Naive thymus-derived CD4-positive, alpha-beta T cell (primary cell): ENCODE measurements at regions of chr9 and their contacts with region 1.

Region 1: GRCh38 chr9:35603987-35604577 is 980 bp upstream of the TESK1 start:
- DNase-seq: peak; percentile 94 to 99 (median 99)
- ATAC-seq: peak; percentile 95
- H3K4me3 ChIP-seq: peak overlapping the region; percentile 65
- H3K4me3 Mint-ChIP-seq: peak overlapping the region; percentile 92 to 100 (median 98)
- H3K27ac ChIP-seq: peak overlapping the region; percentile 84
- H3K27ac Mint-ChIP-seq: peak overlapping the region; percentile 94 to 99 (median 98)
- H3K4me1 ChIP-seq: peaks cover 22 to 24% of the 10 kb centered on the region in 2 donors
- H3K4me1 Mint-ChIP-seq: peaks cover 21 to 42% (median 35%) of the 10 kb centered on the region in 7 donors
- H3K27me3 ChIP-seq: no peaks in the 10 kb centered on the region
- H3K27me3 Mint-ChIP-seq: no peaks in the 10 kb centered on the region

Region 2: GRCh38 chr9:34665381-34666250 is 938.5 kb before region 1 on chr9:
- CTCF ChIA-PET with region 1: no interaction called
- POLR2A ChIA-PET with region 1: no interaction called
- intact Hi-C with region 1: loop called (anchors 1 to 5 kb)
- DNase-seq: peak; percentile 74 to 90 (median 84)
- ATAC-seq: peak; percentile 90
- H3K4me3 ChIP-seq: peak overlapping the region; percentile 99
- H3K4me3 Mint-ChIP-seq: peak overlapping the region; percentile 89 to 97 (median 94)
- H3K27ac ChIP-seq: peak overlapping the region; percentile 98
- H3K27ac Mint-ChIP-seq: peak overlapping the region; percentile 86 to 98 (median 97)
- H3K4me1 ChIP-seq: peaks cover 33 to 40% of the 10 kb centered on the region in 2 donors
- H3K4me1 Mint-ChIP-seq: peaks cover 37 to 58% (median 50%) of the 10 kb centered on the region in 7 donors
- H3K27me3 ChIP-seq: no peaks in the 10 kb centered on the region
- H3K27me3 Mint-ChIP-seq: no peaks in the 10 kb centered on the region

Region 3: DNA sequence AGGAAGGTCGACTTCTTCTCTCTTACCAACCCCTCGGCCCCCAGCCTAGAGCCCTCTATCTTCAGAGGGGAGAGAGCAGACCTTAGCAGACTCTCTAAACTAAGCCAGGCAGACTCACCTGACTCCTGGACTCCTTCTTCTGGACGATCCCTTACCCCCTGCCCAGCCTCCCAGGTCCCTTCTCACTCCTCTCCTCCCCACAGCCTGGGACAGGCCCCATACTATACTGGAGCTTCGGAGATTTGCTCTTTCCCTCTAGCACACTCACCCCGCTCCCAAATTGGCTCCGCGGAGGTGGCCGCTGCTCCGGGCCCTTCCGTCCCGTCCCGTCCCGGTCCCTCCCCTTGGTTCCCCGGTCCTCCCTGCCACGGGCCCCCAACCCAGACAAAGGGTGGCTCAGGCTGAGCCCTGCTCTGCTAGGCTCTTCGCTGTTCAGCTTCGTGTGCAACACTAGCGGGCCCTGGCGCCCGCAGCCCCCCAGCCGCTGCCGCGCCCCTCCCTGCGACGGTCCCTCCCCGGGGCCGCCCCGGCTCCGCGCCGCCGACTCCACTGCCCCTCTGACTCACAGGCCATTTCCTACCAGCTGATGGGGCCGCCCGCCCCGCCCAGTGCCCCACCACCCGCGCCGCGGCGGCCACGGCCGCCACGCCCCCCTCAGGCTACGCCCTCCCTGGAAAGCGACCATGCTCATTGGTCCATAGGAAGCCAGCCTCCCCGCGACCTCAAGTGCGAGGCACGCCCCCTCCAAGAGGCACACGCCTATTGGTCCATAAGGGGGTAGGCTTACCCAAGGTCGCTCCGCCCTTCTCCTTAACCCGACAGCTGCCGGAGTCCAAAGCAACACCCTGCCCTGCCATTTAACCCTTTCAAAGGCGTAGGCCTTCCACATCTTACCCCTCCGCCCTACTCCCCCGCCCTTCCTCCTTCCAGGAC is 492.8 kb before region 1 on chr9:
- CTCF ChIA-PET with region 1: no interaction called
- POLR2A ChIA-PET with region 1: no interaction called
- intact Hi-C with region 1: loop called (anchors 1 kb)
- DNase-seq: peak; percentile 77 to 96 (median 91)
- ATAC-seq: peak; percentile 86
- H3K4me3 ChIP-seq: peak overlapping the region; percentile 69
- H3K4me3 Mint-ChIP-seq: peak overlapping the region; percentile 55 to 87 (median 80)
- H3K27ac ChIP-seq: peak overlapping the region; percentile 71
- H3K27ac Mint-ChIP-seq: peak overlapping the region; percentile 62 to 94 (median 85)
- H3K4me1 ChIP-seq: peaks cover 36 to 37% of the 10 kb centered on the region in 2 donors
- H3K4me1 Mint-ChIP-seq: peaks cover 29 to 63% (median 58%) of the 10 kb centered on the region in 7 donors
- H3K27me3 ChIP-seq: no peaks in the 10 kb centered on the region
- H3K27me3 Mint-ChIP-seq: no peaks in the 10 kb centered on the region

Region 4: GRCh38 chr9:35696525-35697215 is 92.6 kb after region 1 on chr9:
- CTCF ChIA-PET with region 1: interaction called, 8 read pairs
- POLR2A ChIA-PET with region 1: interaction called, 5 read pairs
- intact Hi-C with region 1: loop called (anchors 1 kb)
- DNase-seq: peak in 8 of 9 donors; percentile 15 to 56 (median 41)
- ATAC-seq: peak; percentile 91
- H3K4me3 ChIP-seq: no peak overlapping the region
- H3K4me3 Mint-ChIP-seq: no peak overlapping the region
- H3K27ac ChIP-seq: no peak overlapping the region
- H3K27ac Mint-ChIP-seq: peak overlapping the region in 8 of 9 donors; percentile 33 to 85 (median 66)
- H3K4me1 ChIP-seq: peaks cover 0 to 10% of the 10 kb centered on the region in 2 donors
- H3K4me1 Mint-ChIP-seq: peaks cover 6 to 15% (median 12%) of the 10 kb centered on the region in 7 donors
- H3K27me3 ChIP-seq: no peaks in the 10 kb centered on the region
- H3K27me3 Mint-ChIP-seq: no peaks in the 10 kb centered on the region

Region 5: GRCh38 chr9:35814841-35815543 is 210.9 kb after region 1 on chr9 and contains the start of gene HINT2:
- CTCF ChIA-PET with region 1: no interaction called
- POLR2A ChIA-PET with region 1: interaction called, 7 read pairs
- intact Hi-C with region 1: loop called in 1 of 2 experiments (anchors 1 kb)
- DNase-seq: peak; percentile 84 to 98 (median 96)
- ATAC-seq: peak; percentile 86
- H3K4me3 ChIP-seq: peak within 1 kb of the TSS; percentile 100
- H3K4me3 Mint-ChIP-seq: peak within 1 kb of the TSS; percentile 91 to 100 (median 96)
- H3K27ac ChIP-seq: peak within 1 kb of the TSS; percentile 77
- H3K27ac Mint-ChIP-seq: peak within 1 kb of the TSS; percentile 87 to 99 (median 95)
- H3K4me1 ChIP-seq: peaks cover 19 to 27% of the 10 kb centered on the region in 2 donors
- H3K4me1 Mint-ChIP-seq: peaks cover 23 to 43% (median 38%) of the 10 kb centered on the region in 7 donors
- H3K27me3 ChIP-seq: no peaks in the 10 kb centered on the region
- H3K27me3 Mint-ChIP-seq: peaks cover 0 to 12% (median 0%) of the 10 kb centered on the region in 5 donors
- total RNA-seq, gene HINT2: 14.3 to 50.7 (median 22.2) TPM

Region 6: GRCh38 chr9:37465249-37466036 is 1861.4 kb after region 1 on chr9 and contains the start of gene ZBTB5:
- CTCF ChIA-PET with region 1: no interaction called
- POLR2A ChIA-PET with region 1: no interaction called
- intact Hi-C with region 1: loop called in 1 of 2 experiments (anchors 2 kb)
- DNase-seq: peak; percentile 93 to 99 (median 99)
- ATAC-seq: peak; percentile 87
- H3K4me3 ChIP-seq: peak within 1 kb of the TSS; percentile 76
- H3K4me3 Mint-ChIP-seq: peak within 1 kb of the TSS; percentile 87 to 99 (median 96)
- H3K27ac ChIP-seq: peak within 1 kb of the TSS; percentile 89
- H3K27ac Mint-ChIP-seq: peak within 1 kb of the TSS; percentile 88 to 98 (median 95)
- H3K4me1 ChIP-seq: peaks cover 12 to 24% of the 10 kb centered on the region in 2 donors
- H3K4me1 Mint-ChIP-seq: peaks cover 27 to 43% (median 35%) of the 10 kb centered on the region in 7 donors
- H3K27me3 ChIP-seq: no peaks in the 10 kb centered on the region
- H3K27me3 Mint-ChIP-seq: no peaks in the 10 kb centered on the region
- total RNA-seq, gene ZBTB5: 8.5 to 16.8 (median 14.8) TPM